Posterior vena cava (tissue), 2 donors: ENCODE measurements at regions of chr9 and their contacts with region 1.

Region 1: DNA sequence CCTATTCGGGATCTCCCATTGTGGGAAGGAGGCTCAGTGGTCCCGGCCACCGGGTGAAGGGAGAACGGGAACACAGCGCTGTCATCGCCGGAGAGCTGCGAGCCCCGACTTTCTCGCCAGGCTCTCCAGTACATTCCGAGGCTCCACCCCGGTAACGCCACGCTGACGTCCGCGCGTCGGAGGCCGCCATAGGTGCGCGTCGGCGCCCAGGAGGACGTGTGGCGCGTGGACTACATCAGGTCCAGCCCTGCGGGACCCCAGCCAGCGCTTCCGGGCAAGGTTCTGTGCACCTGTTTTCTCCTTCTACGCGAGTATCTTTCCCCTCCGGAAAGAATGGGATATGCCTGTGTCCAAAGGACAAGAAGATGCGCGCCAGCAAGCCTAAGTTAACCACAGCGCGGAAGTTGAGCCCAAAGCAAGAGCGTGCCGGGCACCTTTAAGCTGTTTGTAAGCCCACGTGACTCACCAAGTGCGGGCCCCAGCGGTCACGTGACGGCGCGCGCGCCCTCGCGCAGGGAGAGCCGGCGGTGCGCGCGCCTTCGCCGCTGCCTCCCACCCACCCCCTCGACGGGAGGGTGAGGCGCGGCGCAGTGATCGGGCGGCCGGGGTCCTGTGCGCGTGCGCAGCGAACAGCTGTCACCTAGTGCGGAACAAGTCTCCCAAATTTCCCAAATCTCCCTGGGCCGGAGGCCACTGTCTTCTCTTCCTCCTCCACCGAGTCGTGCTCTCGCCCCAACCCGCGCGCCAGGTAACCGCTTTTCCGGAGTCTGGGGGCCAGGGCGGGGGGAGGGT is at the start of gene KDM4C:
- DNase-seq: peak; percentile 98
- total RNA-seq, gene KDM4C: 31.1 to 36.7 TPM

Region 2: DNA sequence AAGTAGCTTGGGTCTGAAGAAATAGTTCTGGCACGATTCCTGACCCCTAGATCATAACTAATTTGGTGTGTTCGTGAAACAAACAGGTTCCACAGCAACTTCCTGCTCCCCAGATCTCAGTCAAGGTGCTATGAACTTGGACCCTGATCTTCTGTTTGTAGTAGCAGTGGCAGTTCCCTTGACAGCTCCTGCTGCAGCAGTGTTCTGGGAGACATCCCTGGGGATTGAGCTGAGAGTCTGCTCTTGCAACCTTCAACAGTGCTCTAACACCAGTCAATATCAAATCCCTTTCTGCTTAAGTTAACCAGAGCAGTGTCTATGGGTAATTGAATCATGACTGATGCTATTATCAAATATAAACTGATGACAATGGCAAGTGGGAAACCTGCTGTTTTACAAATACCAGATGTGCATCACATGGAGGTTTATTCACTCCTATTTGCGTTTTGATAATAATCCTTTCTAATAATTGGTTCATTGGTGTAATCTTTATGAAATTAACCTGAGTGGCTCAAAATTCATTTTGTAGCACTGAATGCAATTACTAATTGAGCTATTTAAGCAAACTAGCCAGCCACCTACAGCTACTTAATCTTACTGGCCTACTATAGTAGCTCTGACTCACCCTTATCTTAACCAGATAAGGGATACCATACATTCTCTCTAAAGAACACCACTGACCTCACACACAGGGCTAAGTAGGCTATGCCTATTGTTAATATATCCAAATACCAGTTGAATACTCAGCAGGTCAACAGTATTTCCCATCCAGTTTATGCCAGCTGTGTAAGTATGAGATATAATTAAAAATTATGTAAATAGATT is 22.0 kb after region 1 on chr9:
- intact Hi-C with region 1: loop called in 1 of 2 experiments (anchors 1 kb)
- DNase-seq: no peak